Endothelial cell of umbilical vein (primary cell): ENCODE measurements at regions of chrX and their contacts with region 1.

Region 1: DNA sequence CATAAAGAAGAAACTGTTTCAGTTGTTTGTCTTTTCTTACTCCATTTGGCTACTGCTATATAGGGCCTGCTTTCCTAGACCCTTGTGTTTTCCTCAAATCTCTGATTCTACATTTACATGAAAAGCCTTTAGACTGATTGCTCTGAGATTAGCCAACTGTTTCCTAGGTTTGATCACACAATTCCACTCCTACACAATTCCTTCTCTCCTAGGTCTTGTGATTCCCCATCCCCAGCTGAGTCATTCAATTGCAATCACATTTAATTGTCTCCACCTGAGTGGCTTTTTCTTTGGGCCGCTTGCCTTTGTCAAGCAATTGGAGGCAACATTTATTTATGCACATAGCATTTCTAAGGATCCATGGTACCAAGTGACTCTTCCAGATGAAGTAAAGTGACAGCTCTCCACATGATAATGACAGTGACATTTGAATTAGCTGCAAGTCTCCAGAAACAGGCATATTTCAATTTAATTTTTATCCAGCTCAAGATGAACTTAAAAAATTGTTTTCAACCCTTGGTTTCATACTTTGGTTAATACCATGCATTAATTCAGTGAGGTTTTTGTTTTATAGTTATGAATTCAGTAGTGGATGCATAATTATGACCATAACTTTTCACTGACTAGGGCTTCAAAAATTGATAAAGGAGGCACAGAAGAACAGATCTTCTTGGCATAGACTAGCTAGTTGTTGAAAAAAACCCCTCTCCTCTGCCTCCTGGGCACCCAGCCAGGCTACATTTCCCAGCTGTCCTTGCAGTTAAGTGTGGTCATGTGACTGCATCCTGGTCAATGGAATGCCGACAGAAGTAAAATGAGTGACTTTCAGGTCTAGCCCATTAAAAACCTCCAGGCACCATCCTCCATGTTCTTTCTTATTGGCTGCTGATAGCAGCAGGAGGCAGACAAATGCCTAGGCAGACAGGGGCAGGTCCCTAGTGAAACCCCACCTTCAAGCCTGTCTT is 35.6 kb downstream of the ATXN3L start:
- DNase-seq: peak; percentile 71
- H3K4me3 ChIP-seq: no peak overlapping the region
- H3K27ac ChIP-seq: peak overlapping the region; percentile 62
- H3K4me1 ChIP-seq: peaks cover 49% of the 10 kb centered on the region
- H3K27me3 ChIP-seq: no peaks in the 10 kb centered on the region
- CTCF ChIP-seq: no peak
- POLR2A ChIP-seq: no peak

Region 2: DNA sequence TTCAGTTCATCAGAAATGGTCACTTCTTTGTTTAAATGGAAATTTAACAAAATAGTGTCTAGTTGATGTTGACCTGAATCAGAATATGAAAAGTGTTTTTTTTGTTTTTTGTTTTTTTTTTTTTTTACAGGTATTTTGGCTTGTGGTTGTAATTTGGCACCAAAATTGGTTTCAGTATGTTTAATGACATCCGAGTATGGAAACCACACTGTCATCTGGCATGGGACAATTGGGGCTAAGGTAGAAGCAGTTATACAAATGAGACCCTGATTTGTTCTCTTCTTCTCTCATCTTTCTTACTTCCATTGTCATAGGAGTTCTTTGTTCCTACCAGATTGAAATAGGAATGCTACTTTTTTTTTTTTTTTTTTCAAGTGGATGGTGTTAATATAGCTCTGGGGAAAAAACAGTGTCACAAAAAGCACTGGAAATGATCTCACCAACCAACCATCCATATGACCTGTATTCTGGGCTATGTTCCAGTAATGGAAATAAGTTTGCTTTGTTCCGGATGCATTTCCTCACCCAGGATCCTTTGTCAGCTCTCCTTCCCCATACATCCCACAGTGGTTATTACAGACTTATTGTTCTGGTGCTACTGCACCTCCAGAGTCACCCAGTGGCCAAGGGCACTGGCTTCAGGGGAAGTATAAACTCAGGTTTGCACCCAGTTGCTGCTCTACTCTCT is 60.2 kb before region 1 on chrX:
- CTCF ChIA-PET with region 1: interaction called, 3 read pairs
- POLR2A ChIA-PET with region 1: no interaction called
- dilution Hi-C with region 1: no loop called
- intact Hi-C with region 1: loop called (anchors 1 kb)
- DNase-seq: peak; percentile 91
- H3K4me3 ChIP-seq: no peak overlapping the region
- H3K27ac ChIP-seq: peak overlapping the region; percentile 87
- H3K4me1 ChIP-seq: peaks cover 16% of the 10 kb centered on the region
- H3K27me3 ChIP-seq: no peaks in the 10 kb centered on the region
- CTCF ChIP-seq: peak in 1 of 2 donors; percentile 14
- POLR2A ChIP-seq: no peak